ENCODE measurements at regions of chr11 and their contacts with region 1.

Region 1: DNA sequence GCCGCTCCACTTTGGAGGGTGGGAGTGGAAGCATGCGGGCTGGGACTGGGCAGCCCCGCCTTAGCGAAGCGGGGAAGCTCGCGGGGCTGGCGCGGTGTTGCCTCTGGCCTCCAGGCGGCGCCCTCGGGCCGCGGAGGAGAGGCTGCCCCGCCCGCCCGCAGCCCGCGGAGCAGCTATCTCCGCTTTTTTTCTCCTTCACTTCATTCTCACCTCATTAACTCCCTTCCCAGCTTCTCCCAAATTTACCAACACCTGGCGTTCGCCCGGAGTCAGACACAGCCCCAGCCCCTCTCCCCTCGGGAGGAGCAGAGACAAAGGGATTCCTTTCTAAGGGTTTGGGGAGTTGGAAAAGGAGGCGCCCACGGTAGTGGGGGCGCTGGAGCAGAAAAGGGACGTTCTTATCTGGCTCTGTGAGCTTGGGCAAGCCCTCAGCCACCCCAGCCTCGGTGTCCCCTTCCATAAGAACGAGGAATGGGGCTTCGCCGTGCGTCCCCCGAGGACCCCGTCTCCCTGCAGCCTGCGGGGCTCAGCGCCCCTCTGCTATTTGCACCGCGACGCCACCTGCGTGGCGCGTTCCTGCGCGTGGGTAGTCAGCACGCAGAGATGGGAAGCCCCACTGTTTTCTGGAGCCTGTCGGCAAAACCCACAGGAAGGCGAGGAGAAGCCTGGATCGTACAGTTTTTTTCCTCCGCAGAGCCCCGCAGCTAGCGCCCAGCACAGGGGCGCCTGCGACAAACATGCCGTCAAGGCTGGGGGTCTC is 1.5 kb upstream of the WNT11 start:
- DNase-seq: peak; percentile 80
- ATAC-seq: peak; percentile 76
- H3K4me3 Mint-ChIP-seq: peak overlapping the region; percentile 86
- H3K27ac Mint-ChIP-seq: no peak overlapping the region
- H3K4me1 Mint-ChIP-seq: peaks cover 23% of the 10 kb centered on the region
- H3K27me3 Mint-ChIP-seq: peaks cover 40% of the 10 kb centered on the region
- CTCF ChIP-seq: peak; percentile 78

Region 2: DNA sequence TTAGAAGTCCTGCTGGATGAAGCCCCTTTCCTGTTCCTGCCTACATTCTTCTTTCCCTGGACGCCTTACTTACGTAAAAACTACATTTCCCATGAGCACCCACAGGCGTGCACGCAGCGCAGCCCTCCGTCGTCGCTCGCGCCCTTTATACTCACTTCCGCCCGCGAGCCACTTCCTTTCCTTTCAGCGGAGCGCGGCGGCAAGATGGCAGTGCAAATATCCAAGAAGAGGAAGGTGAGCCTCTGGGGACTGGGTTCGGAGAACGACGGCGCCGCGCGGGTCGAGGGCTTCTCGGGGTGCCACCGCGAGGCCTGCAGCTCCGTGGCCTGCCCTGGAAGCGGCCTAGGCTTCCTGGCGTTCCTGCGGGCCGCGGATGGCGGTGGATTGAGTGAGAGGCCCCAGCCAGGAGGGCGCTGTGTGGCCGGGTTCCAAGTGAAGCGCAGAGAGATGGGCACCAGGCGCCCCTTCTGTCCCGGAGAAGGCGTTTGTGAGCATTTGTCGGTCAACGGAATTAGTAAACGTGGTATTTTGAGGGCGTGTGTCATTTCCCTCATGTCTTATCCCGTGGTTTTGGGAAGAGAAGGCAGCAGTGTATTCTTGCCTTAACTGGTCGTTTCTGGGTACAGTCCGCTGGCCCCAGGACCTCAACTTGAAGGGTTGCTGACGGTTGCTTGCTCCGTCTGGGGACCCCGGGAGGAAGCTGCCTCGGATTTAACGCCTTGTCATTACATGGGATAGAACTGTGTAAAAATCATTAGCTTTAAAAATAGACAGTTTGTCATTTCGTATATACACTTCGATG is 808.3 kb before region 1 on chr11 and contains the start of gene RPS3:
- CTCF ChIA-PET with region 1: no interaction called
- POLR2A ChIA-PET with region 1: interaction called, 4 read pairs
- intact Hi-C with region 1: loop called (anchors 10 kb)
- DNase-seq: peak; percentile 83
- ATAC-seq: peak; percentile 91
- H3K4me3 Mint-ChIP-seq: peak within 1 kb of the TSS; percentile 99
- H3K27ac Mint-ChIP-seq: peak within 1 kb of the TSS; percentile 98
- H3K4me1 Mint-ChIP-seq: peaks cover 49% of the 10 kb centered on the region
- H3K27me3 Mint-ChIP-seq: peaks cover 5% of the 10 kb centered on the region
- CTCF ChIP-seq: no peak
- total RNA-seq, gene RPS3: 4,635 and 5,236 TPM in 2 replicates

Region 3: GRCh38 chr11:75802913-75803820 is 404.7 kb before region 1 on chr11:
- CTCF ChIA-PET with region 1: no interaction called
- POLR2A ChIA-PET with region 1: no interaction called
- intact Hi-C with region 1: loop called (anchors 2 kb)
- DNase-seq: peak; percentile 50
- ATAC-seq: peak; percentile 95
- H3K4me3 Mint-ChIP-seq: no peak overlapping the region
- H3K27ac Mint-ChIP-seq: no peak overlapping the region
- H3K4me1 Mint-ChIP-seq: peaks cover 15% of the 10 kb centered on the region
- H3K27me3 Mint-ChIP-seq: no peaks in the 10 kb centered on the region
- CTCF ChIP-seq: peak; percentile 17

Region 4: DNA sequence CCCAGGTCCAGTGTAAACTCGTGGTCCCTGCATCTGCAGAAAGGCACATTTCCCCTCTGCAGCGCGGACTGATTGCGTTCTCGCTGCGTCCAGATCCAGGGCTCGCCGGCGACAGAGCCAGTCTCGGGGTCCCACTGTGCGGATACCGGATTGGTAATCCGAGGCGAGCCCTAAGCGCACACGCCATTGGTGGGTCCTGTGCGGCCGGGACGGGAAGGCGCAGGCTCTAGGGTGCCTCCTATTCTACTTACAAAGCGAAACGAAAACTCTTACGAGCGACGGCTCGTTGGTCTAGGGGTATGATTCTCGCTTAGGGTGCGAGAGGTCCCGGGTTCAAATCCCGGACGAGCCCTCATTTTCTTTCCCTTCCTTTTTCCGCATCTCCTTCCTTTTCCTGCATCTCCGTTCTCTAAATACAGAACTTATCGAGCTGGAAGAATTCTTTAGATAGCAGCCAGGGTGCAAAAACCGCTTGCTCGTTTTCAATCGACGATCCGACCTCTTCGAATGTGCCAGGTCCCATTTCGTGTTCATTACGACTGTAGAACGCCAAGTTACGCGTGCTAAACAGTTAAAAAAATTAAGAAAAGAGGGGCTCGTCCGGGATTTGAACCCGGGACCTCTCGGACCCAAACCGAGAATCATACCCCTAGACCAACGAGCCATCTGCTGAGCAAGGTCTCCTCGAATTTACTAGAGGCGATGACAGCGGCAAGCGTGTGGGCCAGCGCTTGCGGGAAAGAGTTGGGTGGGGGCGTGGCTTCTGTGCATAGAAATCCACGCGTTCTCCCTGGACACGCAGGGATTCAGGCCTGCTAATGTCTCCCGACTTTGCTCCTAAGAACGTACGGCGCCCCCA is 27.6 kb after region 1 on chr11:
- CTCF ChIA-PET with region 1: interaction called, 49 read pairs
- POLR2A ChIA-PET with region 1: interaction called, 7 read pairs
- intact Hi-C with region 1: loop called (anchors 1 kb)
- DNase-seq: peak; percentile 82
- ATAC-seq: peak; percentile 78
- H3K4me3 Mint-ChIP-seq: peak overlapping the region; percentile 95
- H3K27ac Mint-ChIP-seq: peak overlapping the region; percentile 95
- H3K4me1 Mint-ChIP-seq: peaks cover 32% of the 10 kb centered on the region
- H3K27me3 Mint-ChIP-seq: peaks cover 7% of the 10 kb centered on the region
- CTCF ChIP-seq: no peak

Region 5: DNA sequence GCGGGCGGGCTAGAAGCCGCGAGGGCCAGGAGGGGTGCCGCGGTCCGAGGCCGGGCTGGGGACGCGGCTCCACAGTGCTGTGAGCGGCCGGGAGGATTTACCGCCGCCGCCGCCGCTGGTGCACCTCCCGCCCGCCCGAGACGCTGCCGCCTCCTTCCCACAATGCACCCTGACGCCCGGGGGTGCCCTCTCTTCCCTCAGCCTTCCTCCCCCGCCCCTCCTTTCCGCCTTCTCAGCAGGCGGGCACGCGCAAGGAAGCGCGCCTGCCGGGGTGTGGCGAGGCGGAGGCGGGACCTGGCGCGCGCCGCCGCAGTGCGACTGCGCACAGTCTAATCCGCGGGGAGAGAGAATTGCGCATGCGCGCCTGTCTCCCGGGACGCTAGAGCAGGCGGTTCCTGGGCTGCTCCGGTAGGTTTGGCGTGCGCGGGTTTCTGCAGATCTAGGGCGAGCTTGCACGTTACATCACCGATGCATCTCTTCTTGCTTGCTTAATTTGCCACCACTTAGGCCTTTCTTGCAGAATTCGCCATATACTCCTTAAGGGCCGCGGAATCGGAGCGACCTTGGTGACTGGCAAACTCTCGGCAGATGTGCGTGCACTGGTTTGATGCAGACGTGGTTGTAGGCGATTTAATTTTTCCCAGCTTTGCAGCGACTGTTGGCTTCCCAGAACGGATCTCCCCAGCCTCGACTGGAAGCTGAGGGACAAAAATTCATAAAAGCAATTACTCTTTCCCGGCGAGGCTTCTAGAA is 173.3 kb after region 1 on chr11 and contains the starts of genes GVQW3 and THAP12:
- CTCF ChIA-PET with region 1: no interaction called
- POLR2A ChIA-PET with region 1: no interaction called
- intact Hi-C with region 1: loop called (anchors 1 kb)
- DNase-seq: peak; percentile 97
- ATAC-seq: peak; percentile 87
- H3K4me3 Mint-ChIP-seq: peak within 1 kb of the TSS; percentile 94
- H3K27ac Mint-ChIP-seq: peak within 1 kb of the TSS; percentile 88
- H3K4me1 Mint-ChIP-seq: peaks cover 63% of the 10 kb centered on the region
- H3K27me3 Mint-ChIP-seq: no peaks in the 10 kb centered on the region
- CTCF ChIP-seq: no peak
- total RNA-seq, gene GVQW3: 2.6 and 3.0 TPM in 2 replicates
- total RNA-seq, gene THAP12: 56.5 and 60.2 TPM in 2 replicates

Region 6: DNA sequence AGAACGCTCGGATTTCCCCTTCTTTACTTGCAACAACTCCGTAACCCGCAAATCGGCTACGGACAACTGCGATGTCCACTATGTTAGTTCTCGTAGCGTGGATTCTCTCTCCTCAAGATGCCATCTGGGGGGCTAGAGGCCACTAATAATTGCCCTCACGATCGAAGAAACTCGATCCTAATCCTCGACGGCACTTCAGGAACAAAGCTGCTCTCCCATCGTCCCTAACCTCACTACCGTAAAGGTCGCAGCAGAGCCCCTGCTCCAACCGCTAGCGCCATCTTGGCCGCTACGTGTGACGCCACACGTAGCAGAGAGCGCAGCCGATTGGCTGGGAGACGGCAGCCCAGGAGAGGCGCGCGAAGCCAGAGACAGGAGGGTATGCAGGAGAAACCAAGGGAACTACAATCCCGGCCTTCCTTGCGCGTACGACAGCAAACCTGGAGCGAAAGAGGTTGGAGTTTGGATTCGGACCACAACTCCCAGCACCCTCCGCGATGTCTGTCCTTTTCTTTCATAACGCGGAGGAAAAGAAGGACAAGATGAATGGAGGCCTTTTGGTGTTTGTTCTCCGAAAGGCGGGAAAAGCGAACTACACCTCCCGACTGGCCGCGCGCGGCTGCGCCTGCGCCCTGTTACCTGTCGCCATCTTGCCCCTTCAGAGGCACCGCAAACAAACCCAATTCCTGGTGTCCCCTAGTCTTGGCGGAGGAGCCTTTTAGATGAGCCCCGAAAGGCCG is 236.7 kb after region 1 on chr11 and contains the start of gene EMSY:
- CTCF ChIA-PET with region 1: no interaction called
- POLR2A ChIA-PET with region 1: no interaction called
- intact Hi-C with region 1: loop called (anchors 1 kb)
- DNase-seq: peak; percentile 78
- ATAC-seq: peak; percentile 95
- H3K4me3 Mint-ChIP-seq: peak within 1 kb of the TSS; percentile 95
- H3K27ac Mint-ChIP-seq: peak within 1 kb of the TSS; percentile 93
- H3K4me1 Mint-ChIP-seq: peaks cover 31% of the 10 kb centered on the region
- H3K27me3 Mint-ChIP-seq: no peaks in the 10 kb centered on the region
- CTCF ChIP-seq: no peak
- total RNA-seq, gene EMSY: 24.9 and 31.1 TPM in 2 replicates

Region 7: GRCh38 chr11:76680518-76681425 is 472.9 kb after region 1 on chr11:
- CTCF ChIA-PET with region 1: interaction called, 10 read pairs
- POLR2A ChIA-PET with region 1: no interaction called
- intact Hi-C with region 1: loop called (anchors 1 kb)
- DNase-seq: peak; percentile 62
- ATAC-seq: peak; percentile 77
- H3K4me3 Mint-ChIP-seq: no peak overlapping the region
- H3K27ac Mint-ChIP-seq: no peak overlapping the region
- H3K4me1 Mint-ChIP-seq: peaks cover 50% of the 10 kb centered on the region
- H3K27me3 Mint-ChIP-seq: peaks cover 37% of the 10 kb centered on the region
- CTCF ChIP-seq: no peak

Measured in activated B cell treated with CpG ODN at 0.5 μM for 24 hours (primary cell).